ENCODE measurements at regions of chr18 and their contacts with region 1.

Region 1: DNA sequence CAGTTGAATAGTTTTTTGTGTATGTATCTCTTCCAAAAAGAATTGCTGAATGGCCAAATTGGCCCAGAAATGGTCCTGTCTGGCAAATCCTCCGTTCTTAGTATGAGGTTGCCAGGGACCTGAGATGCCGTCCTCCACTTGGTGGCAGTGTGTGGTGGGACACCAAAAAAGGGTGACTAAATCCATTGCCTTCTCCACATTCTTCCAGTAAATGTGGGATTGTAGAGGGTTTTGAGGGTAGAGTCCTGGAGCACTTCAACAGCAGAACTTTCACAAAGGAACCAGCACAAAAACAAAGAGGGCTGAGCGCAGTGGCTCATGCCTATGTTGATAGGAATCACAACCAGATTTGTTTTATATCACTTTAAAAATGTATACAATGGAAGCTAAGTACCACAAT is 199.9 kb downstream of the BCL2 start:
- DNase-seq: peak; percentile 59
- H3K4me3 ChIP-seq: no peak overlapping the region
- H3K27ac ChIP-seq: 0 out of 4 replicates have a peak overlapping the region, but pooled peaks of 1 of the 2 experiments have one; percentile 28
- H3K4me1 ChIP-seq: no peaks in the 10 kb centered on the region; a peak in 2 of 4 replicates
- H3K27me3 ChIP-seq: no peaks in the 10 kb centered on the region
- CTCF ChIP-seq: peak; percentile 45
- EP300 ChIP-seq: no peak
- RAD21 ChIP-seq: peak; percentile 73

Region 2: DNA sequence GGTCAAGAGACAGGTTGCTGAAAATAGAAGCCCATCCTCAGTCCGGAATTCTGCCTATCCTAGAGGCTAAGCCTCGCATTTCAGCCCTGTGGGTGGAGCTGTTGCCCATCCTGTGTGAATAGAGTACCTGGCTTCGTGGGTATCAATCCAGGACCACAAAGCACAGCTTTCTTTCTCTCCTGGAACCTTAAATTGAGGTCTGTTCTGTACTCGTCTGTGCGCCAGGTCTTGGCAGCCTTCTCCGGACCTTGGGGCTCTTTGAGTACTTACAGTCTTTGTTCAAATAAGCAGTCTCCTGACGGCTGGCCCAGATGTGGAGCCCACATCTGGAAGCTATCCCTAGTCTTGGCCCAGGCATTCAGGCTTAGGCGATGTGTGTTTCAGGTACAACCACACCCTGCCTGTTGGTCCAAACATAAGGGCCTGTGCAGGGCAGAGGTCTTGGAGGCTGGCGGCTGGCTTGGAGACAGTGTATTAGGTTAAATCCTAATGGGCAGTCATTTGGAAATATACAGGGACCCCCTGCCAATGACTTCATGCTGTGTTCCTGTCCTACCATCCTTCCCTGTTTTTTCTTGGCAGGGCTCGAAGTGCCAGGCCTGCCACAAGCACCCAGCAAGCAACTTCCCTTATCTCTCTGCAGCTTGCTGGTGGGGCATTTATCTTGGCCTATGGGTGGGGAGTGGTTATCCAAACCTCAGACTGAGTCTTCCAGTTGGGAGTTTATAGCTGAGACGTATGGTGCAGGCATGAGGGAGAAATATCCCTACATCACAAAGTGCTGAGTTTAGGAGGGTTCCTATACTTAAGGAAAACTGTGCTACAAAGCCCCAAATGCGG is 94.2 kb before region 1 on chr18:
- CTCF ChIA-PET with region 1: interaction called, 10 read pairs
- POLR2A ChIA-PET with region 1: no interaction called
- DNase-seq: peak; percentile 68
- H3K4me3 ChIP-seq: no peak overlapping the region
- H3K27ac ChIP-seq: peak overlapping the region in 1 of 2 experiments; percentile 6; a peak in 2 of 4 replicates
- H3K4me1 ChIP-seq: peaks cover 0 to 7% of the 10 kb centered on the region in 2 experiments; a peak in 1 of 4 replicates
- H3K27me3 ChIP-seq: no peaks in the 10 kb centered on the region
- CTCF ChIP-seq: peak; percentile 34
- EP300 ChIP-seq: no peak
- RAD21 ChIP-seq: peak; percentile 78

Region 3: DNA sequence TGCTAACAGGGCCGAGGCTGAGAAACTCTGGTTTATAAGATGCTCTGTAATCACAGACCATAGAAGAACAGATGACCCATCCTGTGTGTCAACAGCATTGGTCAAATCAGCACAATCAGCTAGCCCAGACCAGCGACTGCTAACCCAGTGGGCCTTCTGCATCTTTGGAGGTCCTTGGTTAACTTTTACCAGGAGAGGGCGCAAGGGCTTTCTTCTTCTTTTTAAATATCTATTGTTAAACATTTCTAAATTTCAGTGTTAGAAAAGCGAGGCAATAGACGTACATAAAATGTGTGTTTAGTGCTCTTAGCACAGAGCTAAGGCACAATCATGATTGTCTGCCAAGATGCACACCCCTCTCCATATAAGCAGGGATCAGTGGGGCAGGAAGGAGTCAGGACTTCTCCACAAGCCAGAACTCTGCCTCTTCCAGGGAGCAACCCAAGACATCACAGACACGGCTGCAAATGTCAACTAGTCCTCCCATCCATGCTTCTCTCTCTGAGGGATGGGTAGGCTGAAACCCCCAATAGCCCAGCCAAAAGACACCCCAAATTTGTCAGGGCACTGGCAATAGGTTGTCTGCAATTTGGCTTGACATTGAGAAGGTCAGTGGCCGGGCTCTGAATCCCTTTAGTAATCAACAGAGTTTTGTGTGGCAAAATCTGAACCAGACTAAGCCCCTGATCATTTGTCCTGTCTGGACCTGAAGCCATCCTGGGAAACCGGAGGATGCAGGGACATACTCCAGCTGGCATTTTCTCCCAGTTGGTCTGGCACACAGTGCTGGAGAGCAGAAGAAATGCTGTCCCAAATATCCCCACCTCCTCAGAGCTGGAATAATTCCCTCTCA is 11.7 kb after region 1 on chr18:
- CTCF ChIA-PET with region 1: interaction called, 11 read pairs
- POLR2A ChIA-PET with region 1: no interaction called
- DNase-seq: peak; percentile 53
- H3K4me3 ChIP-seq: no peak overlapping the region; a peak in 1 of 4 replicates
- H3K27ac ChIP-seq: no peak overlapping the region; a peak in 1 of 4 replicates
- H3K4me1 ChIP-seq: peaks cover 0 to 12% of the 10 kb centered on the region in 2 experiments; a peak in 1 of 4 replicates
- H3K27me3 ChIP-seq: no peaks in the 10 kb centered on the region
- CTCF ChIP-seq: peak; percentile 79
- EP300 ChIP-seq: no peak
- RAD21 ChIP-seq: peak; percentile 74

Region 4: DNA sequence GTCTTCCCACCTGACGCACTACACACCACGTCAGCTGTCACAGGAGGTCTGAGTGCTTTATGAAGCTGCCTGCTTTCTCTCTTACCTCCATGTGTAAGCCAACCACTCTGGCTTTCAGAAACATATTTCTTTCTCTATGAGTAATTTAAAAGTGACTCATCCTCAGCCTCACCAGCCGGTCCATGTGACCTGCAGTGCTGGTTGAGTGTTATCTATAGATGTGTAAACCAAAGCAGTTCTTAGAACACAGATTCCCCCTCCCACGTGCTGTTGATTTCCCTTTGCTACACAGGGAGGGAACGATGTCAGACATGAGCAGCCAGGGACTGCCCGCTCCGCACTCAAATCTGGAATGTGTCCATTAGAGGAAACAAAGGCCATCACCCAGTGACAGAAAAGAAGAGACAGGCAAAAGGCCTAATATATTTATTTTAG is 42.1 kb after region 1 on chr18:
- CTCF ChIA-PET with region 1: no interaction called
- POLR2A ChIA-PET with region 1: no interaction called
- DNase-seq: no peak
- H3K4me3 ChIP-seq: no peak overlapping the region
- H3K27ac ChIP-seq: peak overlapping the region; percentile 79 to 83
- H3K4me1 ChIP-seq: peaks cover 11 to 37% of the 10 kb centered on the region in 2 experiments; a peak in 2 of 4 replicates
- H3K27me3 ChIP-seq: no peaks in the 10 kb centered on the region
- CTCF ChIP-seq: no peak
- EP300 ChIP-seq: peak; percentile 15 to 78; a peak in 1 of 4 replicates
- RAD21 ChIP-seq: no peak

Measured in SK-N-SH (cell line).